Lower leg skin (tissue), 4 donors: ENCODE measurements at regions of chr16 and their contacts with region 1.

Region 1: DNA sequence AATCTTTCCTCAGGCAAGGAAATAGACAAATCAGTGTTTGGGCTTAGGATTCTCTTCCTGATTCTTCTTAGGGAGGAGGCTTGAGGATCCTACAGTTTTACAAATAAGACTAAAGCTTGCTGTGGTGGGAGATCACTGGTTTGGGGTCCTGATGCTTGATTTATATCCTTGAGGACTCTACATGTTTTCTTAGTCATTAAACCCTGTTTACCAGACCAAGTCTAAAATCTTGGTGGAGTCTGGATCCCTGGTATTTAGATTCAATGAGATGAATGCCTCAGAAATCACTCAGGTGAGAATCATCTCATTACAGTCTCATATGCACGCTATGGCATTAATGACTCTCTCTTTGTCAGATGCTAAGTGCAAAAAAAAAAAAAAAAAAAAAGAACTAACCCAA is 304.3 kb upstream of the SALL1 start:
- DNase-seq: no peak
- H3K4me3 ChIP-seq: no peak overlapping the region
- CTCF ChIP-seq: no peak
- POLR2A ChIP-seq: no peak

Region 2: DNA sequence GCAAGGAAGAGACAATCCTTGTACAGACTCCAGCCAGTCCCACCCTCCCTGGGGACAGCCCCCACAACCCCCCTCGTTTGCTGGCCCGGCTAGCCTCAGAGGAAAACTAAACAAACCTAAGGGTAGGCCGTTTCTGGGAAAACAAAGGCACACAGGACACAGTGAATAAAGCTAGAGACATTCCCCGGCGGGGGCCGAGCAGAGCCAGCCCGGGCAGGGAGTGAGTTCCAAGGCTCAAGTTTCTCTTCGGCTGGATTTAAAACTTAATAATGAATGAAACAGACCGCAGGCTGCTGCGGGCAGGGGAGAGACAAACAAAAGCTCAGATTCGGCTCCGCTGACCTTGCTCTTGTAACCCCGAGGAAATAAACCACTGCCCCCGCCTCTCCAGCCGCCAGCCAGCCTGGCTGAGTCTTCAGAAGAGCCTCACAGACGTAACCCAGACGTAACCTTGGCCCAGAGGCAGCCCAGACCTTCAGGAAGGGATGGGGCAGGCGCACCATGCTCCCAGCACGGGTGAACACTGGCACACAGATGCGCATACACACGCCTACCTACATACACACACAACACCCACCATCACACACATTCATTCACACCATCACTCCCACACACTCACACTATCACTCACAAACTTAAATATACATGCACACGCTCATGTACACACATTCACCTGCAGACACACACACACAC is 1815.5 kb before region 1 on chr16:
- intact Hi-C with region 1: no loop called
- DNase-seq: no peak
- H3K4me3 ChIP-seq: no peak overlapping the region
- CTCF ChIP-seq: peak in 1 of 3 donors; percentile 11
- POLR2A ChIP-seq: no peak

Region 3: GRCh38 chr16:51163894-51164566 is 291.4 kb before region 1 on chr16:
- intact Hi-C with region 1: no loop called
- DNase-seq: no peak
- H3K4me3 ChIP-seq: no peak overlapping the region
- CTCF ChIP-seq: no peak
- POLR2A ChIP-seq: no peak

Region 4: DNA sequence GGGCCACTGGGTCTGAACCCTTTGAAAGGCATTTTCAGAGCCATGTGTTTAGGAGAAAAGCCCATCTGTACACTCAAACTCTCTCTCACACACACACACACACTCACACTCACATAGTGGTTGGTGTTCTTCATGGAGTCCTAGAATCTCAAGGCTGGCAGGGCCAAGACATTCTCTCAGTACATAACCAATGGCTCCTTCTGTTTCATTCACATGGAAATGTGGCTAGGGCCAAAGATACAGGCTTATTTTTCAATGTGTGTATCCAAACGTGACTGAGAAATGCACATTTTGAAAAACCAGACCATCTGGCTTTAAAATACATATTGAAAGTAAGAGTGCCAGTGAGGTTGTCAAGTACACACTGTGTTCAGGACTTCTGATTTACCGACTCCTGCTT is 245.3 kb before region 1 on chr16:
- intact Hi-C with region 1: no loop called
- DNase-seq: no peak
- H3K4me3 ChIP-seq: no peak overlapping the region
- CTCF ChIP-seq: no peak
- POLR2A ChIP-seq: no peak

Region 5: DNA sequence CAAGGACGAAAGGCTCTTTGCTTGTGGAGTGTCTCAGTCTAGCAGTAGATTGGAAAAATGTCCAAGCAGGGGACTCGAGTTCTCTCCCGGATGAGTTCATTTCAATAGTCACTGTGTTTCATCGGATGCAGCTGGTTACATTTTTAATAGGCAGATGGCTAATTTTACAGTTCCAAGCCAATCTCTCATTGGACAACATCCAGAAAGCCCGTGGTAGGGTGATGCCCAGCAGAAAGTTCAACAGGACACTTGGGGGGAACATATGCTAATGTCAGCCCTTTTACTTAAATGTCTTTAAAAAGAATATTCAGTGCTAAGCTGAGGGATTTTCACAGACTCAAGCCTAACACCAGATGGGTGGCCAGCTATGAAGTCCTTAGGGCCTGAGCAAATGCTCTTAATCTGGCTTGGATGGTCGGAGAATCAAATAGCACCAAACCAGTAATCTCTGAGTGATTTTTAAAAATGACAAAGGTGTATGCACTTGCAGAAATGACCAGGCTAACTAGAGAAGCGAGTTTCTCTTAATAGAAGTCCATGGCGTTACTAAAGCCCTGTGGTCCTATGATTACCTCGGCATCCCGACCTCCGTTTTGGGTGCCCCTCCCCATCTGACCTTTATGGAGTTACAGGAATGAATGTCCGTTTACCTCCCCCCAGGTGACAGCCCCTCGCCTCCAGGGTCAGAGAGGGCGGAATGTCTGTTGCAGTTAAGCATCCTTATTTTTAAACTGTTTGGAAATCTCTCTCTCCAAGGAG is 15.1 kb before region 1 on chr16:
- intact Hi-C with region 1: loop called (anchors 1 kb)
- DNase-seq: no peak
- H3K4me3 ChIP-seq: no peak overlapping the region
- CTCF ChIP-seq: no peak
- POLR2A ChIP-seq: no peak

Region 6: GRCh38 chr16:51797669-51798259 is 342.4 kb after region 1 on chr16:
- intact Hi-C with region 1: no loop called
- DNase-seq: no peak
- H3K4me3 ChIP-seq: no peak overlapping the region
- CTCF ChIP-seq: no peak
- POLR2A ChIP-seq: no peak